Heart left ventricle (tissue), 16 donors: ENCODE measurements at regions of chr5 and their contacts with region 1.

Region 1: GRCh38 chr5:93674866-93675459 is 66.4 kb downstream of the POU5F2 start:
- DNase-seq: no peak
- ATAC-seq: no peak
- H3K4me3 ChIP-seq: no peak overlapping the region
- H3K27ac ChIP-seq: no peak overlapping the region
- H3K4me1 ChIP-seq: peaks cover 0 to 34% (median 6%) of the 10 kb centered on the region in 12 donors
- H3K27me3 ChIP-seq: no peaks in the 10 kb centered on the region
- CTCF ChIP-seq: no peak
- POLR2A ChIP-seq: no peak

Region 2: DNA sequence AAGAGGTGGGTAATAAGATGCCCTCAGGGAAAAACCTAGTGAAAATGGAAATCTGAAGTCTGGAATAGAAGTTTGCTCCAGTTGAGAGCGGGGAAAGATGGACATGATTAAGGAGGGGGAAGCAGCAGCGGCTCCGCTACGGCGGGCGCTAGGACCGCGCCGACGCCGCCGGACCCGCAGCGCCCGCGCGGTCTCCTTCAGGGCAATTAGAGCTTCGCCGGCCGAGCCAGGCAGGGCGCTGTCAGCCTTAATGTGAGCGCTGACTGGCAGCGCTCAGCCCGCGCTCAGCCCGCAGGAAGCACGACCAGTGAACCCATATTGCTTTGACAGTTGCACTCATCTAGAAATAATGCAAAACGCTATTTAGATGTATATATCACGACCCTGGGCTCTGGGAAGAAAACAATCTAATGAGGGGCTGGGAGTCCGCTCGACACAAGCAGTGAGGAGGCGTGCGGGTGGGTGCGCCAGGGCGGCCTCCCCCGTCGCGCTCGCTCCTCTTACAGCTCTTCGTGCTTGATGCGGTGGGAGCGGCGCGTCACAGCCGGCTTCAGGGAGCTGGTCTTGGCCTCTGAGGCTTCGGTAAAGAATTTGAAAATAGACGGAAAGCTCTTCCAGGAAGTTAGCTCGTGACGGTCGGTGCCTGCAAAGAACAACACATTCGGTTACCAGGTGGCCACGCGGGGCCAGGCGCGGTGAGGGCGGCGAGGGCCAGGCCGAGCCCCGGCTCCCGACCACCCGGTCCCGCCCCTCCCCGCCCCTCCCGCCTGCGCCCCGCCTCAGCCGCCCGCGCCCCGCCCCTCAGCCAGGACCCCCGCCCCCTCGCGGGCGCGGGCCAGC is 54.3 kb before region 1 on chr5:
- intact Hi-C with region 1: loop called in 1 of 10 experiments (anchors 5 kb)
- DNase-seq: peak; percentile 55 to 83 (median 76)
- ATAC-seq: peak; percentile 86 to 95 (median 94)
- H3K4me3 ChIP-seq: peak overlapping the region; percentile 48 to 79 (median 66)
- H3K27ac ChIP-seq: peak overlapping the region in 11 of 12 donors; percentile 39 to 83 (median 68)
- H3K4me1 ChIP-seq: peaks cover 0 to 19% (median 4%) of the 10 kb centered on the region in 12 donors
- H3K27me3 ChIP-seq: peaks cover 0 to 13% (median 0%) of the 10 kb centered on the region in 9 donors
- CTCF ChIP-seq: peak in 2 of 12 donors; percentile 18 to 39
- POLR2A ChIP-seq: no peak